Left cardiac atrium (tissue), 4 donors: ENCODE measurements at regions of chr5 and their contacts with region 1.

Region 1: DNA sequence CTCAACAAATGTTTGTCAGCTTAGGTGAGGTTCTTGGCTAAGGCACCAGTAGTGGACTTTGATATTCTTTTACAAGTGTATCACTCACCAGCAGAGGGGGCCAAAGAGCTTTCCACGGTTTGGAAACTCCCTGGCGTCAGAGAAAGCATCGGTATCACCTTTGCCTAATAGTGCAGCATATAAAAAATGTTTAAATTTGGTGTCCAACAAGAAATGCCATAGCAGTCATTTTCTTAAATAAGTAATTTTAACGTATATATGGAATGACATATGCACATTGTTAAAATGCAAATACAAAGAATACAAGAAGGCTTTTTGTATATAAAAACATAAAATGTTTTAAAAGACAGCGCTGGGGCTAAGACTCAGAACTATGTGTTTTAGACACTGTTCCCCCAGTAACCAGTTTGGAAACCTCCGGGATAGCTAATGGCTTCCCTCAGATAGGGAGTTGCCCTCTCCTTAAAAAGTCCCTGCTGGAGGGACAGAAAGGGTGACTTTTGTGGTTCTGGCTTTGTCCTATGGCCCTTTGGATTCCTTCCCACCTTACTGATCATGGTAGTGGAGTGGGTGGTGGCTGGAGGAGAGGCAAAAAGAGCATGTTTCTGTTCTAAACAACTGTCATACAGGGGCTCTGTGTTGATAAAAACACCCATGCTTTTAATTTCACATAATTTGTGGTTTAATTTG is 124.6 kb downstream of the GPBP1 start:
- DNase-seq: peak; percentile 84
- ATAC-seq: peak; percentile 90 to 94

Region 2: DNA sequence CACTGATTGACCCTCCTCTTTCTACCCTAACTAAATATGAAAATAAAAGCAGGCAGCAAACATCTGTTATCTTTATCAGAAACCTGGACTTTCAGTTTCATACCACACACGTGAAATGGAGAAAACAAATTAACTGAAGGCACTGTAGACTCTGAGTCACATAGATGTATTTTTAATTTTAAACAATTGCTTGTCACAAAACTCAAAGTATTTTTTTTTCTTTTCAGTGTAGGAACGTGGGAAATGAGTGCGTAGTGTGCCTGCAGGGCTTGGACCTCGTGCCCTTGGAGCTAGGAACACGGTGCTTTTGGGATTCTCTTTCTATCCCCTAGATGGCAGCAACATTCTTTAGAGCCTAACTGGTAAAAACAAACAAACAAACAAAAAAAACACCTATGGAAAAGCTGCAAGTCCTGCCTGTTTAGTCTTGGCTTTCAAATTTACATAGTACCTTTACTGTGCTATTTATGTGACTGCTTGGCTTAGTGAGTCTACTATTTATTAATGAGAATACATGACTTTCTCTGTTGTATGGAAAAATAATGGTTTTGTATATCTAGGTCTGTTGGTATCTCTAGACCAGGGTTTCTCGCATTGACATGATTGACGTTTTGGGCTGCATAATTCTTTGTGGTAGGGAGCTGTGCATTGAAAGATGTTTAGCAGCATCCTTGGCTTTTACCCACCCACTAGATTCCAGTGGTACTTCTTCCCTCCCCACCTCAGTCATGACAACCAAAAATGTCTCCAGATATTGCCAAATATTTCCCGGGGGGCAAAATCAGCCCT is 201.0 kb after region 1 on chr5:
- intact Hi-C with region 1: loop called (anchors 5 to 10 kb)
- DNase-seq: no peak
- ATAC-seq: peak; percentile 32